Aorta (tissue), 5 donors: ENCODE measurements at regions of chr6 and their contacts with region 1.

Region 1: DNA sequence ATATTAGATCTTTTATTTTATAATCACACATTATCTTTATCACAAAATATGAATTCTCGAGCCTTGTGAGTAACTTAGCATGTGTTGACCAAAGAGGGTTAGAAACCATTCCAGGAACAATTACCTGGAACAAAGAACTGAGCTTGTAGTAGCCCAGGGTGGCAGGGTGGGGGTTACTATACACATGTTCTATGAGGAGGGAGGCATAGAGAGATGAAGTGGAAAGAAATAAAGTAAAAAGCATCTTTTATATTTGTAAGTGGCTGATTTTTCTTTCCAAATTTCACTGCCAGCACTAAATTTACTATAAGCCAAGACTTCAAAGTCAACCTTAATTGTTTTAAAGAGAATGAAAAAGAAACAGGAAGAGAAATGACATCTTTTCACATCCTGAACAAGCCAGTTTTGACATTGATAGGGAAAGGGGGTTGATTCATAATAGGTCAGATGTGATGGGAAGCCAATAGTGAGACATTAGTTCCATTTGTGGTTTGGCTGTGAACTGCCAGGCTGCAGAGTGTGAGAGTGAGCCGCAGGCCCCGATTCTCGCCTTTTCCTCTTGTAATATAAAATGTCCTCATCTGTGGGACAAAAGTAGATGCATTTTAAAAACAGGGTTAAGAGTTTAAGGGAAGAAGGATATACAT is 52.7 kb upstream of the MYB start:
- DNase-seq: no peak
- ATAC-seq: no peak
- H3K4me3 ChIP-seq: no peak overlapping the region
- H3K27ac ChIP-seq: no peak overlapping the region
- H3K4me1 ChIP-seq: no peaks in the 10 kb centered on the region
- H3K27me3 ChIP-seq: no peaks in the 10 kb centered on the region

Region 2: GRCh38 chr6:135114355-135115145 is 13.8 kb before region 1 on chr6:
- intact Hi-C with region 1: loop called in 1 of 2 experiments (anchors 1 kb)
- DNase-seq: no peak
- ATAC-seq: no peak
- H3K4me3 ChIP-seq: no peak overlapping the region
- H3K27ac ChIP-seq: no peak overlapping the region
- H3K4me1 ChIP-seq: no peaks in the 10 kb centered on the region
- H3K27me3 ChIP-seq: peaks cover 0 to 2% of the 10 kb centered on the region in 2 donors

Region 3: DNA sequence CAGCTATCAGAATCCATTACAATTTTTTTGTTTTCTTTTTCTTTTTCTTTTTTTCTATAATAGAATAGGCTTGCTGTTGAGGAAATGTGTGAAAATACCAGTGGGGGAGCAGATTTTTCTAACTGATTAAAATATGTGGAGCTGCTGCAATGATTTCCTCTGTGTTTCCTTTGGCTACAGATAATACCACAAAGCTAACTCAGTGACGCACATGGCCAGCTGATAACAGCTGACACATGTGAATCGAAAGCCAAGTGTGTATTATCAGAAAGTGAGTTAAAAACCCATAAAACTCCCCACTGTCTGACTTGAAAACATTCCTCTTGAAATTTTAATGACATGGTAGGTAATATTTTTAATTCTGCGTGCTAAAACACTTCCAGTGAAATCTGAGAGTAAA is 440.0 kb after region 1 on chr6:
- intact Hi-C with region 1: no loop called
- DNase-seq: peak in 1 of 2 donors; percentile 45
- ATAC-seq: peak; percentile 60
- H3K4me3 ChIP-seq: no peak overlapping the region
- H3K27ac ChIP-seq: no peak overlapping the region
- H3K4me1 ChIP-seq: no peaks in the 10 kb centered on the region
- H3K27me3 ChIP-seq: peaks cover 0 to 3% of the 10 kb centered on the region in 2 donors